ENCODE measurements at regions of chr2 and their contacts with region 1.

Region 1: DNA sequence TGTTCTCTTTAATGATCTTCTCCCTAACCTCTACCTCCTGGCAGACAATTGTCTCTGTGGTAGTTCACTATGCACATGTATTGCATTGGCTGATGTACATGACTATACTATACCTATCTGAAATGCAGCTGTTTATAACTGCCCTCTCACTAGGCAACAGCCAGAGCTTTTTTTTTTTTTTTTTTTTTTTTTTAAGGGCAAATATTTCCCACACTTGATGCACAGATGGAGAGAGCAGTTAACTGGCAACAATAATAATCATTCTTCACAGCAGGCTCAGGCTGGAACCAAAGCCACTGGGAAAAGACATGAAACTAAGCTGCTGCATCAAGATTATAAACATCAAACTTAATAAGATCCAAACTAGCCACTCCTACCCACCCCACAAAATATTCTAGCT is 707.7 kb downstream of the LRP1B start:
- DNase-seq: no peak
- H3K4me3 ChIP-seq: no peak overlapping the region
- H3K27ac ChIP-seq: no peak overlapping the region
- H3K4me1 ChIP-seq: no peaks in the 10 kb centered on the region
- H3K27me3 ChIP-seq: no peaks in the 10 kb centered on the region
- CTCF ChIP-seq: no peak

Region 2: DNA sequence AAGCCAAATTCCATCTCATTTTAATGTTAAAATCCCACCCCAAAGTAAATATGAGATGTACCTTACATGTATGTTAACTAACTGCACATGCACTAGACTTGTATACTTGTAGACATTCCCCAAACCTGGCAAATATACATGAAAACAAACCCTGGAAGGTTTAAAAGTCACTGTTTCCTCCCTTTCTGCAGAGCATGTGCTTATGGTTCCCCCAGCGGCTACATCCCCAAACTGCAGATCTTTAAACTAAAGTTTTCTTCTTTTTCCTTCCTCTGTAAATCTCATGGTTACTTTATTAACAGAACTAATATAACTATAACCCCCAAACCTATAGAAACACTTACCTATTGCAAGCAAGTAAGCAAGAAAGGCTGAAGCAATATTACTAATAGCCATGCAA is 23.9 kb before region 1 on chr2:
- CTCF ChIA-PET with region 1: no interaction called
- POLR2A ChIA-PET with region 1: interaction called, 32 read pairs
- intact Hi-C with region 1: no loop called
- DNase-seq: no peak
- H3K4me3 ChIP-seq: no peak overlapping the region
- H3K27ac ChIP-seq: no peak overlapping the region
- H3K4me1 ChIP-seq: peaks cover 6% of the 10 kb centered on the region
- H3K27me3 ChIP-seq: no peaks in the 10 kb centered on the region
- CTCF ChIP-seq: peak; percentile 14; the same call in 1 of the 2 replicates

Measured in A673 (cell line).